ENCODE measurements at regions of chr10 and their contacts with region 1.

Region 1: GRCh38 chr10:63083904-63084689 is 49.0 kb upstream of the NRBF2 start:
- DNase-seq: peak; percentile 89
- H3K4me3 ChIP-seq: no peak overlapping the region
- H3K27ac ChIP-seq: peak overlapping the region in 1 of 4 donors; percentile 31
- H3K4me1 ChIP-seq: peaks cover 0 to 11% (median 0%) of the 10 kb centered on the region in 4 donors
- H3K27me3 ChIP-seq: no peaks in the 10 kb centered on the region
- CTCF ChIP-seq: peak; percentile 52 to 64 (median 60)
- EP300 ChIP-seq: no peak
- POLR2A ChIP-seq: no peak

Region 2: DNA sequence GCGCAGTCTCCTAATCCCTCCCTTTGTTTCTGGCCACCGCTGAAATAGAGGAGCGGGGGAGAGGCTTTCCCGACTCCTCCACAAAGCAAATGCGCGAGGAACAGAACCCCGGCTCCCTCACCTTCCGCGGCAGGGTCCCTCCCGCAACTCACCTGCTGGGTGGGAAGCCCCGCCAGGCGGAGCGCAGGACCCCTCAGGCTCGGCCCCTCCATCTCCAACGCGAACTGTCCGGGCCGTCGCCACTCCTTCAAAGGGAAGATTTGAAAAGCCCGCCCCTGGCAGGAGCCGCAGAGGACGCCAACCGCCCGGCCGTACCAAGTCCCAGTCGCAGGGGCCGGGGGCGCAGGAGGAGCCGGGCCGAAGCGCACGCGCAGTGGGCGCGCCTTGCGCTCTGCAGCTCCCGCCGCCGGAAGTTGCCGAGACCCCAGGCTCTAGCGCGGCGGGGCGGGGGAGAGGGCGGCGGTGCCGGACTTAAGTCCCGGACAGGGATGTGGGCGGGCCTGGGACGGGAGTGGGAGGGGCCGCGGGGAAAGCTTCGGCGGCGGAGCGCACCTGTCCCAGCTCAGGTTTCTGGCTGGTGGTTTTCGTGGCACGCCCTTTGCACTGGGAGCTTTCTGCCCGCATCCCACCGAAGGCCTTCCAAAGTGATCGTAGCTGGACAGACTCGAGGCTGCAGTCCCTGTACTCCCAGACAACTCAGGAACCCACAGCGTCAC is 815.5 kb before region 1 on chr10 and contains the start of gene RTKN2:
- intact Hi-C with region 1: loop called (anchors 10 kb)
- DNase-seq: peak; percentile 78
- H3K4me3 ChIP-seq: peak within 1 kb of the TSS; percentile 58 to 84 (median 64)
- H3K27ac ChIP-seq: peak within 1 kb of the TSS in 1 of 4 donors; percentile 34
- H3K4me1 ChIP-seq: peaks cover 0 to 14% (median 10%) of the 10 kb centered on the region in 4 donors
- H3K27me3 ChIP-seq: peaks cover 0 to 6% (median 0%) of the 10 kb centered on the region in 3 donors
- CTCF ChIP-seq: no peak
- EP300 ChIP-seq: no peak
- POLR2A ChIP-seq: no peak
- total RNA-seq, gene RTKN2: not detected

Region 3: GRCh38 chr10:62437696-62438095 is 646.4 kb before region 1 on chr10:
- intact Hi-C with region 1: loop called (anchors 5 kb)
- DNase-seq: no peak
- H3K4me3 ChIP-seq: no peak overlapping the region
- H3K27ac ChIP-seq: peak overlapping the region in 1 of 4 donors; percentile 42
- H3K4me1 ChIP-seq: peaks cover 0 to 31% (median 21%) of the 10 kb centered on the region in 4 donors
- H3K27me3 ChIP-seq: no peaks in the 10 kb centered on the region
- CTCF ChIP-seq: peak; percentile 43 to 85 (median 66)
- EP300 ChIP-seq: peak in 1 of 4 donors; percentile 11
- POLR2A ChIP-seq: no peak

Region 4: DNA sequence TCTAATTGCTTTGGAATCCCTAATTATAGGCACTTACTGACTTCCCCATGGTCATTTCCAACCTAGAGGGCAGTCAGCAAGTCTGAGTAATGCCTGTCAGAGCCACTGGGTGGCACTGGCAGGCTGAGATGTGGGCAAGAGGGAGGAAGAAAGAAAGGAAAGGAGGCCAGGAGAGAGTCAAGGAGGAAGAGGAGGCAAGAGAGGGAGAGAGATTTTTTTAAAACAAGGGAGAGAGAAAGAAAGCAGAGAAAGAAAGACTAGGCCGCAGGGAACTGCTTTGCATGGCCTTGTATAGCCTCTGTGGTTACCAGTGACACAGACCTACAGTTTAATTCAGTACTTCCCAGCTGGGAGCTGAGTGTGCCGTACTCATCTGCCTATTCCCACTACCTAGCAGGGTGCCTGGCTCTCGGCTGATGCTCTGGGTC is 490.0 kb before region 1 on chr10:
- intact Hi-C with region 1: loop called (anchors 5 kb)
- DNase-seq: no peak
- H3K4me3 ChIP-seq: no peak overlapping the region
- H3K27ac ChIP-seq: no peak overlapping the region
- H3K4me1 ChIP-seq: no peaks in the 10 kb centered on the region
- H3K27me3 ChIP-seq: no peaks in the 10 kb centered on the region
- CTCF ChIP-seq: peak; percentile 68 to 89 (median 86)
- EP300 ChIP-seq: no peak
- POLR2A ChIP-seq: no peak

Region 5: GRCh38 chr10:63133056-63133820 is 49.1 kb after region 1 on chr10 and contains the start of gene NRBF2:
- intact Hi-C with region 1: no loop called
- DNase-seq: peak; percentile 99
- H3K4me3 ChIP-seq: peak within 1 kb of the TSS; percentile 82 to 93 (median 86)
- H3K27ac ChIP-seq: peak within 1 kb of the TSS; percentile 90 to 92 (median 91)
- H3K4me1 ChIP-seq: peaks cover 0 to 33% (median 27%) of the 10 kb centered on the region in 4 donors
- H3K27me3 ChIP-seq: no peaks in the 10 kb centered on the region
- CTCF ChIP-seq: peak in 1 of 4 experiments; percentile 19
- EP300 ChIP-seq: no peak
- POLR2A ChIP-seq: peak; percentile 92 to 93
- total RNA-seq, gene NRBF2: 12.7 to 15.0 (median 13.8) TPM